Activated CD4-positive, alpha-beta T cell treated with anti-CD3 and anti-CD28 coated beads, Interleukin-2, amount 10 ng/mL, durations not matched to agents 24 days and 14 days (primary cell): ENCODE measurements at regions of chr5 and their contacts with region 1.

Region 1: DNA sequence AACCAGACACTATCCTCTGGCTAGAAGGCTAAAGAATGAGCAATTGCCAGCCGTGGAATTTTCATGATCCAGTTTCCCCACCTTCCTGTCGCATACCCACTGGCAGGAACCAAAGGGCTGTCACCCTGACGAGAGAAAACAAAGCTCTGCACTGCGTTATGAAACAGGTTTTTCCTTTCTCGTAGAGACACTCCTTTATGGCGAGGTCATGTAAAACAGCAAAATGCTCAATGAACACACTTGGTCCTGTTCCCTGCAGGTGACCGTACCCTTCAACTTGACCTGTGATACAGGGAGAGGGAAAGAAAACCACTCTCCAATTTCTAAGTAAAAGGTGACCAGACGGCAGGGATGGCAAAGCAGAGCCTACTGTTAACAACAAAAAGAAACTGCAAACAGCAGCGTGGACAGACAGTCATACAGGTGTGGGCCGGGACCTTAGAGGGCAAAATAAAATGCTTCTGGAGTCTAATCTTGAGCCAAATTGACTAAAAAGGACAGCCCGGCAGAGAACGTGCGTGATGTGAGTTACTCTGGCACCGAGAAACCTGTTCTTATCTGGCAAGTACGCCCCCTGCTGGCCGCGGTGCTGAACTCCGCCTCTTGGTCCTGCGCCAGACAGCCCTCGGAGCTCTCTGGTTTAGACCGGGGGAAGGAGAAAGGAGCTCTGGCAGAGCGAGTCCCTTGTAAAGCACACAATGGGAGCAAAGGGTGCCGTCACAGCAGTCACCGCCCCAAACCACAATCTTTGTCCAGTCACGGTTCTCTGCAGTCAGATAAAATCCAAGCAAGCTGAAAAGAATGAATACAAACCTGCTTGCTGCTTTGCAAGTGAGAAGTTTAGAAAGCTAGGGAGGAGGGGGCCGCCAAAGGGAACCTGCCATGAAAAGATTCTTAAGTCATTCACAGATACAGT is 98.9 kb downstream of the EFNA5 start:
- DNase-seq: peak; percentile 95
- H3K4me3 Mint-ChIP-seq: peak overlapping the region; percentile 80
- H3K27ac Mint-ChIP-seq: no peak overlapping the region
- H3K4me1 Mint-ChIP-seq: peaks cover 16% of the 10 kb centered on the region
- H3K27me3 Mint-ChIP-seq: peaks cover 36% of the 10 kb centered on the region

Region 2: GRCh38 chr5:107289030-107289714 is 282.7 kb before region 1 on chr5:
- intact Hi-C with region 1: loop called (anchors 10 kb)
- DNase-seq: no peak
- H3K4me3 Mint-ChIP-seq: no peak overlapping the region
- H3K27ac Mint-ChIP-seq: peak overlapping the region; percentile 40
- H3K4me1 Mint-ChIP-seq: peaks cover 15% of the 10 kb centered on the region
- H3K27me3 Mint-ChIP-seq: no peaks in the 10 kb centered on the region

Region 3: GRCh38 chr5:107389130-107389774 is 182.6 kb before region 1 on chr5:
- intact Hi-C with region 1: loop called (anchors 2 kb)
- DNase-seq: peak; percentile 78
- H3K4me3 Mint-ChIP-seq: peak overlapping the region; percentile 33
- H3K27ac Mint-ChIP-seq: peak overlapping the region; percentile 85
- H3K4me1 Mint-ChIP-seq: peaks cover 20% of the 10 kb centered on the region
- H3K27me3 Mint-ChIP-seq: peaks cover 4% of the 10 kb centered on the region

Region 4: DNA sequence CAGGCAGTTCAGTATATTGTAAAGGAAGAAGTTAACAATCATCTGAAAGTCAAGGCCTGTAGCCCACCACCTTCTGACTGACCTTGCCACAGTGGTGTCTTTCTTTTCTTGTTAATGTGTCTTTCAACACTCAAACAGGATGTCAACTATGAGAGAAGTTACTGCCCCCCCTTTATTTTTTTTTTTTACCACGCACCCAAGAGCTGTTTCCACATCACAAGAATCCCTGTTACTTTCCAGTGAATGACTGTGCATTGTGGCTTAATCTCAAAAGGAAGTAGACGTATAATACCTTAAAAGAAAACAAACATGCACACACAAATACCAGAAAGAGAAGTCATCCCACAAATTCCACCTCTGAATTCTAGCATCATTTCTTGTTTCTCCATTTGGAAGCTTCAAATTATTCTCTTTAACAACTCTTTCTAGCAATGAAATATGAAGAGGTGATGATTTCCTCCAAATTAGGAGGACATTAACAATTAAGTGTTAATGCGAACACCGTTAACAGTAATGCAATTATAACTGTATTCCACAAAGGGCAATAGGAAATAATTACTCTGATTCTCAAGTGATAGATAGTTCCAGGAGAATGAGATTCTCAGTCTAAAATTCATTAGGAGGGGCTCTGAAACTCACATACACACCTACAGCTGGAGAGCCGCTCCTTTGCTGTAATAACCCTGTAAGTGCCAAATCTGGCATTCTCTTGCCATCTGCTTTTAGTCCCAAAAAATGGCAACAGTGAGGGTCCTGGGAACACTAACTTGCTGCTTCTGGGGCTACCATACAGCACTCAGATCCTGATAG is 102.2 kb before region 1 on chr5:
- intact Hi-C with region 1: loop called (anchors 5 kb)
- DNase-seq: peak; percentile 53
- H3K4me3 Mint-ChIP-seq: no peak overlapping the region
- H3K27ac Mint-ChIP-seq: no peak overlapping the region
- H3K4me1 Mint-ChIP-seq: peaks cover 7% of the 10 kb centered on the region
- H3K27me3 Mint-ChIP-seq: peaks cover 3% of the 10 kb centered on the region

Region 5: DNA sequence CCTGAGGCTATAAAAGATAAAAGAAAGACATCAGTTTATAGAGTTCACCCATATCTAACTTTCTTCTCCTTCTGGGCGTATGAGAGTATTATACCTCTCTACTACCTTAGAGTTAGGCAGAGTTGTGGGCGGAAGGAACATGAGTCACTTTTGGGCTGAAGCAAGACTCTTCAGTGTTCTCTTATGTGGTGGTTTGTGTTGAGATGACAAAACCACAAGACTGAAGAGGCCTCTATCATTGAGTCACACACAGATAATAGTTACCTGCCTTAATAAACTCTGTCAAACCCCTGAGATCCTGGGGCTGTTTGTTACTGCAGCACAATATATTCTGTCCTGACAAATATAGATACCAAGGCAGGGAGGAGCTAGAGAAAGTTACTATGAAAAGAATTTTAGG is 85.4 kb before region 1 on chr5:
- intact Hi-C with region 1: loop called (anchors 5 kb)
- DNase-seq: peak; percentile 79
- H3K4me3 Mint-ChIP-seq: no peak overlapping the region
- H3K27ac Mint-ChIP-seq: no peak overlapping the region
- H3K4me1 Mint-ChIP-seq: peaks cover 20% of the 10 kb centered on the region
- H3K27me3 Mint-ChIP-seq: peaks cover 10% of the 10 kb centered on the region

Region 6: DNA sequence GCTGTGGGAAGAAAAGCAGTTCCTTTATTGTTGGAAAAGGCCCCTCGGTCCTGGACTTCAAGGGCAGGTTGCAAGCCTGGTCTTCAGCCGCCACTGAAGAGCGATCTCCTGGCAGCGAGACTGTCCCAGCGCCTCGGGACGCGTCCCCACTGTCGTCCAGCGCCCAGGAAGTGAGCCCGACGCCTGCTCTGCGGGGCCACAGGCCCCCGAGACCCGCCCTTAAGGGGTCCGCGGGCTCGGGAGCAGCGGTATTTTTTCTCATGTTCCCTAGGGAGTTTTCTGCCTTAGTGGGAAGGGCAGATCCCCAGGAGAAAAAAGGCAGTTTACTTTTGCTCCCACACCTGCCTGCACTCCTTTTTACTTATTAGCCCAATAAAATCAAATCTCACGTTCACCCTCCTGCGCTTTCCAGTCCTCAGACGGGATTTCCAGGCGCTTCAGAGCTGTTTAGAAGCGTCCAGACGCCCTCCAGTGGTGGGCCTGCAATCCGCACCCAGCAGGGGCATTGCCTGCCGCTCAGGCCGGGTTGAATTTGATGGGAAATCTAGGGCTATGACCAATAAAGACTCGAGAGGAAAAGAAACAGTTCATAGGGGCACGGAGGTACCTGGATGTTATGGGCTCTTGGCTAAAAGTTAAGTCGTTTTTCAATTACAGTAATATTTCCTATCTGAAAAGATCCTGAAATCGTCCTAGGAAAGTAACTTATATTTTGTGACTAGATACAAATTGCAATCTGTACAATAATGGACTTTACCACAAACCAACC is 101.7 kb after region 1 on chr5:
- intact Hi-C with region 1: loop called (anchors 2 kb)
- DNase-seq: peak; percentile 91
- H3K4me3 Mint-ChIP-seq: peak overlapping the region; percentile 77
- H3K27ac Mint-ChIP-seq: no peak overlapping the region
- H3K4me1 Mint-ChIP-seq: peaks cover 25% of the 10 kb centered on the region
- H3K27me3 Mint-ChIP-seq: peaks cover 62% of the 10 kb centered on the region